ENCODE measurements at regions of chr1 and their contacts with region 1.

Region 1: GRCh38 chr1:112454316-112454715 is 54.4 kb upstream of the WNT2B start:
- DNase-seq: no peak
- ATAC-seq: no peak

Region 2: GRCh38 chr1:112402682-112403643 is 51.4 kb before region 1 on chr1:
- intact Hi-C with region 1: loop called in 1 of 2 experiments (anchors 5 kb)
- DNase-seq: no peak
- ATAC-seq: no peak